Spleen (tissue), 13 donors: ENCODE measurements at regions of chr12 and their contacts with region 1.

Region 1: GRCh38 chr12:4276524-4277204 is 3.1 kb downstream of the CCND2 start:
- DNase-seq: peak; percentile 91
- H3K4me3 ChIP-seq: peak overlapping the region in 5 of 8 donors; percentile 57 to 74 (median 66)
- H3K27ac ChIP-seq: peak overlapping the region in 4 of 8 donors; percentile 93 to 98 (median 95)
- H3K4me1 ChIP-seq: peaks cover 13 to 100% (median 89%) of the 10 kb centered on the region in 6 donors
- H3K27me3 ChIP-seq: peaks cover 0 to 50% (median 29%) of the 10 kb centered on the region in 7 donors
- CTCF ChIP-seq: peak; percentile 84 to 94 (median 92)
- POLR2A ChIP-seq: no peak

Region 2: DNA sequence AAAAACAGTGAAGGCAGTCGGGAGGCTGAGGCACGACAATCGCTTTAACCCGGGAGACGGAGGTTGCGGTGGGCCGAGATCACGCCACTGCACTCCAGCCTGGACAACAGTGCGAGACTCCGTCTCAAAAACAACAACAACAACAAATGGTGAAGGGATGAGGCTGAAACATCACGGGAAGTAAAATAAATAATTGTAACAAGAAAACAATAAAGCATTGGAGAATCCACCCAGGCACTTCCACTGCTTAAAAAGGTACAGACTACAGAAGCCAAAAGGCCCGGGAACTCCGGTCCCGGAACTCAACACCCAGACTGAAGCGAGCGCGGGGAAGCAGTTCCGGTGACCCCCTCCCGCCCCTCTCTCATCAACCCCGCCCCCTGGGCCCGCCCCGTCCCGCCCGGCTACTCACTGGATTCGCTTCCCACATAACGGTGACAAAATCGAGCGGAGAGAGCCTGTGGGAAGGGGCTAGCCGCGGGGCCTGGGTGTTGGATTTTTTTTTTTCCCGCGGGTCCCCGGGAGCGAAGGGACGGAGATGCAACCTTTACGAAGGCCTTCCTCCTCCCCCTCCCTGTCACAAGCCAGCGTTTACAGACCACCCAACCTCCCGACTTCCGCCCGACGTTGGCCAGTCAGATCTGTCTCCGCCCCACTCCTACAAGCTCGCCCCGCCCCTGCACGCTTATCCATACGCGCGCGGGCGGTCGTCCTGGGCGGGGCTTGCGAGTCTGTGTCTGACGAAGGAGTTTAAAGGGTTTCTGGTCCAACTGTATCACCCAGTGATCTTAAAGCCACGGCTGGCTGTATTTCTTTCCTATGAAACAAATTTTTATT is 403.6 kb before region 1 on chr12 and contains the start of gene PARP11:
- intact Hi-C with region 1: loop called (anchors 5 kb)
- DNase-seq: peak; percentile 99
- H3K4me3 ChIP-seq: peak within 1 kb of the TSS; percentile 53 to 84 (median 65)
- H3K27ac ChIP-seq: peak within 1 kb of the TSS; percentile 84 to 97 (median 95)
- H3K4me1 ChIP-seq: peaks cover 18 to 54% (median 41%) of the 10 kb centered on the region in 6 donors
- H3K27me3 ChIP-seq: no peaks in the 10 kb centered on the region
- CTCF ChIP-seq: peak in 2 of 11 experiments; percentile 8 to 13
- POLR2A ChIP-seq: peak in 2 of 3 donors; percentile 50 to 59
- total RNA-seq, gene PARP11: 12.7 to 25.2 (median 22.4) TPM

Region 3: GRCh38 chr12:3885277-3886094 is 391.2 kb before region 1 on chr12:
- intact Hi-C with region 1: loop called (anchors 5 kb)
- DNase-seq: no peak
- H3K4me3 ChIP-seq: peak overlapping the region in 6 of 8 donors; percentile 19 to 56 (median 28)
- H3K27ac ChIP-seq: peak overlapping the region; percentile 23 to 82 (median 63)
- H3K4me1 ChIP-seq: peaks cover 0 to 16% (median 10%) of the 10 kb centered on the region in 6 donors
- H3K27me3 ChIP-seq: peaks cover 0 to 9% (median 0%) of the 10 kb centered on the region in 7 donors
- CTCF ChIP-seq: peak; percentile 45 to 90 (median 74)
- POLR2A ChIP-seq: no peak

Region 4: GRCh38 chr12:3995306-3995705 is 281.4 kb before region 1 on chr12:
- intact Hi-C with region 1: loop called (anchors 2 kb)
- DNase-seq: no peak
- H3K4me3 ChIP-seq: no peak overlapping the region
- H3K27ac ChIP-seq: no peak overlapping the region
- H3K4me1 ChIP-seq: no peaks in the 10 kb centered on the region
- H3K27me3 ChIP-seq: peaks cover 0 to 28% (median 0%) of the 10 kb centered on the region in 7 donors
- CTCF ChIP-seq: no peak
- POLR2A ChIP-seq: no peak

Region 5: DNA sequence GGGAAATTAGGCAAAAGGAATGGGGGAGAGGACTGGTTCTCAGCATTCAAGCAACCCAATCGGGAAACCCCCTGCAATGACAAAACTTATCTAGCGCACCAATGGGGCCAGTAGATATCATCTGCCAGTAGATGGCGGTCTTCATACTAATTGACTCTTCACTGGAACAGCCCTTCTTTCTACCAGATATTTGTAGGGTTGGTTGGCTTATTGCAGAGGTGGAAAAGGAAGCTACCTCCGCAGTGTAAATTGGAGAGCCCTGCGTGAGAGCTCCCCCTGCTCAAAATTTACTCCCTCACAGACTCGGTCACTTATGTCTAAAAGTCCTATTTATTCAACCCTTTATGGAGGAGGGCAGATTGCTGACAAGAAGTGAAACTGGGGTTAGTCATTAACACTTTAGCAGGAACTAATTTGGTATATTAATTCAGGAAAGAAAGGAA is 169.2 kb before region 1 on chr12:
- intact Hi-C with region 1: loop called (anchors 2 kb)
- DNase-seq: no peak
- H3K4me3 ChIP-seq: no peak overlapping the region
- H3K27ac ChIP-seq: no peak overlapping the region
- H3K4me1 ChIP-seq: peaks cover 0 to 17% (median 6%) of the 10 kb centered on the region in 6 donors
- H3K27me3 ChIP-seq: peaks cover 0 to 21% (median 0%) of the 10 kb centered on the region in 7 donors
- CTCF ChIP-seq: peak; percentile 67 to 91 (median 82)
- POLR2A ChIP-seq: no peak